Endothelial cell of umbilical vein (primary cell): ENCODE measurements at regions of chr3 and their contacts with region 1.

Region 1: DNA sequence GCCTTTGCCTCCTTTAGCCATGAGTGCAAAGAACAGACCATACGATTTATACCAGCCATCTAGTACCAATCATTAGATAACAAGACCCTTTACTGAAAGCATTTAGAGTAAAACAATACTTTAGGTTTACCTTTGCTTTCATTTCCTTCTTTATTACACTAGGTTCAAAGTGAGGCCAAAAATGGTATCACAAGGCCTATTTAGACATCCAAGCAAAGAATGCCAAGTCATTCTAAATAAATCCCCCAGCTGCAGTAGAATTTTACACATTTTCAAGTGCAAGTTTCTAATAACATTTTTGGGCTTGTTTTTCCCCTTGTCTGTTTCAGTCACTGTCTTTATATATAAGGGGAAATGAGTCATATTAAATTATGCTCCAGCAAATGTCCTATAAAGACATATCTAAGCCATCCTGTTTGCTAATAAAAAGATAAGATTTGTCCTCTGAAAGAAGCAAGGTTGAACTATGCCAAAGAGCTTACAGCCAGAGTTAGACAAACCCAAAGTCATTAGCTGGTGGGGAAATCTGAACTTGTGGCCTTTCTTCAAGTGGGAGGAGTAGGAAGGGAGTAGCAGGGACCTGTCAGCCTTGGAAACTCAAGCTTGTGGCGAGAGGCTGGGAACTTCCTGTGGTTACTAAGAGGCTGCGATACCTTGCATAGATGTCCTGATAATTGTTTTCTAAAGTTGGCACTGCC is 232.7 kb downstream of the MECOM start:
- DNase-seq: peak; percentile 90
- H3K4me3 ChIP-seq: no peak overlapping the region
- H3K27ac ChIP-seq: peak overlapping the region; percentile 79
- H3K4me1 ChIP-seq: peaks cover 30% of the 10 kb centered on the region
- H3K27me3 ChIP-seq: no peaks in the 10 kb centered on the region
- CTCF ChIP-seq: no peak
- POLR2A ChIP-seq: no peak

Region 2: GRCh38 chr3:169348929-169349613 is 81.8 kb before region 1 on chr3:
- CTCF ChIA-PET with region 1: no interaction called
- POLR2A ChIA-PET with region 1: interaction called, 11 read pairs
- dilution Hi-C with region 1: no loop called
- intact Hi-C with region 1: no loop called
- DNase-seq: peak; percentile 69
- H3K4me3 ChIP-seq: peak overlapping the region in 2 of 3 experiments; percentile 14 to 22
- H3K27ac ChIP-seq: peak overlapping the region; percentile 78
- H3K4me1 ChIP-seq: peaks cover 15% of the 10 kb centered on the region
- H3K27me3 ChIP-seq: no peaks in the 10 kb centered on the region
- CTCF ChIP-seq: no peak
- POLR2A ChIP-seq: no peak

Region 3: DNA sequence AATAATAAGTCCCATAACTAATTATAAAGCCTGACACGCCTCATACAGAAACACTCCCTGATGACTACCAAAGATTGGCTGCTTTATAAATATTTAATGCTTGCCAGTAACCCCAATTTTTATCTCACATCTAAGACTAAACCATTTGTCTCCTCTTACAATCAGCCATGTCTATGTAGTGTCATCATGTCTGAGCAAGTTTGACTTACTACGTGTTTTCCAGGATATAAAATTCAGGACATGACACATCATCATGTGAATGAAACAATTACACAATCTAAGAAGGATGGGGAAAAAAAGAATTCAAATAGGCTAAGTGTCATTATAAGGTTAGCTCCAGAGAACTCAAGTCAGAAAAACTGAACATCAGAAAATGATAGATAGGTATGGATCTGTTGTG is 24.0 kb after region 1 on chr3:
- CTCF ChIA-PET with region 1: interaction called, 3 read pairs
- POLR2A ChIA-PET with region 1: interaction called, 3 read pairs
- dilution Hi-C with region 1: no loop called
- intact Hi-C with region 1: loop called (anchors 2 kb)
- DNase-seq: peak; percentile 93
- H3K4me3 ChIP-seq: no peak overlapping the region
- H3K27ac ChIP-seq: peak overlapping the region; percentile 69
- H3K4me1 ChIP-seq: peaks cover 28% of the 10 kb centered on the region
- H3K27me3 ChIP-seq: no peaks in the 10 kb centered on the region
- CTCF ChIP-seq: no peak
- POLR2A ChIP-seq: no peak

Region 4: DNA sequence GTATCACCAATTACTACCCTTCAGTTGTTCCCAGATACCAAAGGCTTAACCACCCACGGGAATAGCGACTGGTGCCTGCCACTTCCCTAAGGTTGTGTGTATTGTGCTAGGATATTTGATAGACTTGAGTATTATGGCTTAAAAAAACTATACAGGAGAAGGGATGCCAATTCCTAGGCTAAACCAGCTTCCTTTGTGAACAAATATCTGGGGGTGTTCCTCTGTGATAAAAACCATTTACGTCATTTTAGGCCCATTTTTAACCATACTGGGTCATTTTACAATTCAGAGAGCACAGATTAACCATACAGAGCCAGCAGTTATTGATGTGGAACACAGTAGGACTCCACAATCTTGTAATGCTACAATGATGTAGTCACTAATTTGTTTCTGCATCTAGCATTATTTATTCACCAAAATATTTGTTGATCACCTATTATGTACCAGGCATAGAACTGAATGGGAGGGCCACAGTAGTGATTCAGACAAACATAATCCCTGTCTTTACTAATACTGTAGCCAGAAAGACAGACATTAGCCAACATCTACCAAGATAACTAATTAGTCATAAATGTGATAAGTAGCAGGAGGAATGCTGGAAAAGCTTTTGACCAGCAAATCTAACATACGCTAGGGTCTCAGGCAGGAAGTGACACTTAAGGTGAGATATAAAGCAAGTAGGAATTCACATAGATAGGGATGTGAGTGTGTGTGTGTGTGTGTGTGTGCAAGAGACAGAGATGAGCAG is 47.9 kb after region 1 on chr3:
- CTCF ChIA-PET with region 1: no interaction called
- POLR2A ChIA-PET with region 1: no interaction called
- dilution Hi-C with region 1: no loop called
- intact Hi-C with region 1: no loop called
- DNase-seq: no peak
- H3K4me3 ChIP-seq: no peak overlapping the region
- H3K27ac ChIP-seq: peak overlapping the region; percentile 34
- H3K4me1 ChIP-seq: peaks cover 6% of the 10 kb centered on the region
- H3K27me3 ChIP-seq: no peaks in the 10 kb centered on the region
- CTCF ChIP-seq: no peak
- POLR2A ChIP-seq: no peak

Region 5: DNA sequence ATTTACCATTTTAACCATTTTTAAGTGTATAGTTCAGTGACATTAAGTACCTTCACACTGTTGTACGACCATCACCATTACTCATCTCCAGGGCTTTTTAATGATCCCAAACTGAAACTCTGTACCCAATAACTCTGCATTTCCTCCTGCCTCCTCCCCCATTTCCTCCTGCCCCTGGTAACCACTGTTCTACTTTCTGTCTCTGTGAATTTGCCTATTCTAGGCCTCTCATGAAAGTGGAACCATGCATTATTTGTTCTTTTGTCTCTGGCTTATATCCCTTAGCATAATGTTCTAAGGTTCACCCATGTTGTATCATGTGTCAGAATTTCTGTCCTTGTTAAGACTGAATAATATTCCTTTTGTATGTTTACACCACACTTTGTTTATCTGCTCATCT is 78.5 kb after region 1 on chr3:
- CTCF ChIA-PET with region 1: no interaction called
- POLR2A ChIA-PET with region 1: no interaction called
- dilution Hi-C with region 1: no loop called
- intact Hi-C with region 1: no loop called
- DNase-seq: peak; percentile 38
- H3K4me3 ChIP-seq: no peak overlapping the region
- H3K27ac ChIP-seq: peak overlapping the region; percentile 27
- H3K4me1 ChIP-seq: peaks cover 25% of the 10 kb centered on the region
- H3K27me3 ChIP-seq: no peaks in the 10 kb centered on the region
- CTCF ChIP-seq: no peak
- POLR2A ChIP-seq: no peak